ENCODE measurements at regions of chr6 and their contacts with region 1.

Region 1: GRCh38 chr6:138115877-138116660 is 8.8 kb upstream of the PERP start:
- DNase-seq: peak; percentile 74
- ATAC-seq: peak; percentile 89
- H3K4me3 ChIP-seq: no peak overlapping the region
- H3K27ac ChIP-seq: no peak overlapping the region
- H3K4me1 ChIP-seq: no peaks in the 10 kb centered on the region
- H3K27me3 ChIP-seq: peaks cover 19% of the 10 kb centered on the region
- CTCF ChIP-seq: peak; percentile 87
- POLR2A ChIP-seq: no peak
- RAD21 ChIP-seq: peak; percentile 87

Region 2: GRCh38 chr6:138287144-138287955 is 171.3 kb after region 1 on chr6:
- CTCF ChIA-PET with region 1: no interaction called
- POLR2A ChIA-PET with region 1: no interaction called
- dilution Hi-C with region 1: no loop called
- in situ Hi-C with region 1: no loop called
- intact Hi-C with region 1: loop called (anchors 5 kb)
- DNase-seq: no peak
- ATAC-seq: no peak
- H3K4me3 ChIP-seq: no peak overlapping the region
- H3K27ac ChIP-seq: no peak overlapping the region
- H3K4me1 ChIP-seq: no peaks in the 10 kb centered on the region
- H3K27me3 ChIP-seq: peaks cover 7% of the 10 kb centered on the region
- CTCF ChIP-seq: 0 out of 2 replicates have a peak, but pooled peaks have one; percentile 6
- POLR2A ChIP-seq: no peak
- RAD21 ChIP-seq: no peak

Region 3: DNA sequence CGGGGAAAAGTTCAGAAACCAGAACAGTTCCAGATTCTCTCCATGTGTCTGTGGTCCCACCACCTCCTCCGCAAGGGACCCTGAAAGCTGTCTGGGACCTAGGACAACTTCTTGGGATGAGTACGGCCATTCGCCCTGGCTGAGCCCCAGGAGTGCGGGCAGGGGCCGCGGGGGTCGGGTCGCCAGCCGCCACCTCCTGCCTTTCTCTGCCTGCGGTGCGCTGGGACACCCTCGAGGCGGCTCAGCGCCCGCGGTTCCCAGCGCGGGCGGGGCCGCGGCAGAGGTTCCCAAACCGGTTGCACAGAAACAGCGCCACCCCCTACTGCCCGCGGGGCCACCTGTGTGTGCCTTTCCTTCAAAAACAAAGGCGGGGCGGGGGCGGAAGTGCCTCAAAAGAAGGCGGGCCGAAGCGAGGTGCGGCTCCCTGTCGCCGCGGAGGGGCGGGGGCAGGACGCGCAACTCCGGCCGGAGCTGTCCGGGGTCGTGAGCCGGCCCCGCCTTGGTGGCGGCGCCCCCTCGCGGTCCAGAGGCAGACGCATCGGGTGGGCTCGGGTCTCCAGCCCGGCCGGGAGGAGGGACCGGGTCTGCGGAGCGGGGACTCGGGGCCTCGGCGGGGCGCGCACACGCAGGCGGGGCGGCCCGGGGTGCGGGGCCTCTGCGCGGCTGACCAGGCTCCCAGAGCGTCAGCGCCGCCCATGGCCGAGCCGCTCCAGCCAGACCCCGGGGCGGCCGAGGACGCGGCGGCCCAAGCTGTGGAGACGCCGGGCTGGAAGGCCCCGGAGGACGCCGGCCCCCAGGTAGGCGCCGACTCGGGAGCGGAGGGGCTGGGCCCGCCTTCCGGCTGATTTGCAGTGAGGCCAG is 288.0 kb after region 1 on chr6 and contains the start of gene HEBP2:
- CTCF ChIA-PET with region 1: no interaction called
- POLR2A ChIA-PET with region 1: no interaction called
- dilution Hi-C with region 1: no loop called
- in situ Hi-C with region 1: no loop called
- intact Hi-C with region 1: loop called (anchors 2 kb)
- DNase-seq: peak; percentile 65
- ATAC-seq: peak; percentile 88
- H3K4me3 ChIP-seq: peak within 1 kb of the TSS; percentile 79
- H3K27ac ChIP-seq: peak within 1 kb of the TSS; percentile 68
- H3K4me1 ChIP-seq: peaks cover 3% of the 10 kb centered on the region
- H3K27me3 ChIP-seq: no peaks in the 10 kb centered on the region
- CTCF ChIP-seq: peak; percentile 50
- POLR2A ChIP-seq: no peak
- RAD21 ChIP-seq: peak; percentile 33
- total RNA-seq, gene HEBP2: 3.9 and 5.6 TPM in 2 replicates

Region 4: DNA sequence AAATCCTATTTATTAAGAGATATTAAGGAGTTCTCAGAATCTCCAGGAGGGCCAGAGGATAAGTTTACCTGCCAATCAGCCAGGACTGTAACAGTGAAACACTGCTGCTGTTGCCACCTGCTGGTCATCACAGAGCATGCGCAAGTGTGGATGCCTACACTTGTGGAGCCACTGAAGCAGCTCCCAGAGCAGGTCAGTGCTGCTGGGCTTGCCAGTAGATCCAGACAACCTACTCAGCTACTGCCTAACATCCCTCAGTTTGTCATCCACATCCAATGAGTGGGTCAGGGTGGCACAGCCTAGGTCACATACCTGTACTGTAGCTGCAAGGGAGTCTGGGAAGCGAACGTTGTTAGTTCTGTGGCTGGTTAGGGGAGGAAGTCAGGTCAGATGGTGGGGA is 401.6 kb after region 1 on chr6:
- CTCF ChIA-PET with region 1: interaction called, 6 read pairs
- POLR2A ChIA-PET with region 1: no interaction called
- dilution Hi-C with region 1: no loop called
- in situ Hi-C with region 1: loop called (anchors 5 kb)
- intact Hi-C with region 1: loop called (anchors 2 kb)
- DNase-seq: peak; percentile 43
- ATAC-seq: peak; percentile 76
- H3K4me3 ChIP-seq: no peak overlapping the region
- H3K27ac ChIP-seq: no peak overlapping the region
- H3K4me1 ChIP-seq: no peaks in the 10 kb centered on the region
- H3K27me3 ChIP-seq: no peaks in the 10 kb centered on the region
- CTCF ChIP-seq: peak; percentile 55
- POLR2A ChIP-seq: no peak
- RAD21 ChIP-seq: peak; percentile 53

Region 5: DNA sequence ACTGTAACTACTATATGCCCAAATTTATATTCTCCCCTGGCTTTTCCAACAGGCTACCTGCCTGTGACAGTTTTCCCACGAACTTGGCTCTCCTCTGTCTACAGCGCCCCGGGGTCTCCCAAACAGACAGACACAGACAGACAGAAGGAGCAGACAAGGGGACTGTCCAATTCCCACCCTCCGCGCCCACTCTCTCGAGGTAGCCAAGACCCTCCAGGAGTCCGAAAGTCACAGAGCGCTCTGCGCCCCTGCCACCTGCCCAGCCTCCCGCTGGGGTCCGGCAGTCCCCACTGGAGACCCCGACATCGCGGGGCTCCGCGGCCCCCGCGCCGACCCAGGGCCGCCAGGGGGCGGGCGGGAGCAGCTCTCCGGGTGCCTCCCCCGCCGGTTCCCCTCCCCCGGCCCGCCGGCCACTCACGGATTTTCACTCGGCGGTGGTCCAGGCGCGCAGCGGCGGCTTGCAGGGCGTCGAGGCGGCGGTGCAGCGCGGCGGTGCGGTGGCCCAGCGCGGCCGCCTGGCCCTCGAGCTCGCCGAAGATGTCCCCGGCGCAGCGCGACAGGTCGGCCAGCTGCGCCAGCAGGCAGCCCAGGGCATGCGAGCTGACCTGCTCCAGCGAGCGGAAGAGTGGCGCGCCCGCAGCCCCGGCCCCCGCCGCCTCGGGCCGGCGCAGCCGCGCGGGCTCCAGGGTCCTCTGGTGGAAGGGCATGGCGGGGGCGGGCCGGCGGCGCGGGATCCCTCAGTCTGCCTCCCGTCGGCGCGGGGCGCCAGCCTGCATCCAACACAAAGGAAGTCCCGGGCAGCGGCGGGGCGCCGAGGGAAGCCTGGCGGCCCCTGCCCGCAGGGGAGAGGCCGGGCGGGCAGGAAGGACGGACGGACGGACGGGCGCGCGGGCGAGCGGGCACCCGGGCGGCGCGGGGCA is 576.2 kb after region 1 on chr6:
- CTCF ChIA-PET with region 1: no interaction called
- POLR2A ChIA-PET with region 1: no interaction called
- dilution Hi-C with region 1: no loop called
- in situ Hi-C with region 1: no loop called
- intact Hi-C with region 1: loop called (anchors 5 kb)
- DNase-seq: peak; percentile 50
- ATAC-seq: peak; percentile 79
- H3K4me3 ChIP-seq: peak overlapping the region; percentile 88
- H3K27ac ChIP-seq: peak overlapping the region; percentile 65
- H3K4me1 ChIP-seq: no peaks in the 10 kb centered on the region
- H3K27me3 ChIP-seq: no peaks in the 10 kb centered on the region
- CTCF ChIP-seq: peak; percentile 75
- POLR2A ChIP-seq: no peak
- RAD21 ChIP-seq: peak; percentile 40

Region 6: DNA sequence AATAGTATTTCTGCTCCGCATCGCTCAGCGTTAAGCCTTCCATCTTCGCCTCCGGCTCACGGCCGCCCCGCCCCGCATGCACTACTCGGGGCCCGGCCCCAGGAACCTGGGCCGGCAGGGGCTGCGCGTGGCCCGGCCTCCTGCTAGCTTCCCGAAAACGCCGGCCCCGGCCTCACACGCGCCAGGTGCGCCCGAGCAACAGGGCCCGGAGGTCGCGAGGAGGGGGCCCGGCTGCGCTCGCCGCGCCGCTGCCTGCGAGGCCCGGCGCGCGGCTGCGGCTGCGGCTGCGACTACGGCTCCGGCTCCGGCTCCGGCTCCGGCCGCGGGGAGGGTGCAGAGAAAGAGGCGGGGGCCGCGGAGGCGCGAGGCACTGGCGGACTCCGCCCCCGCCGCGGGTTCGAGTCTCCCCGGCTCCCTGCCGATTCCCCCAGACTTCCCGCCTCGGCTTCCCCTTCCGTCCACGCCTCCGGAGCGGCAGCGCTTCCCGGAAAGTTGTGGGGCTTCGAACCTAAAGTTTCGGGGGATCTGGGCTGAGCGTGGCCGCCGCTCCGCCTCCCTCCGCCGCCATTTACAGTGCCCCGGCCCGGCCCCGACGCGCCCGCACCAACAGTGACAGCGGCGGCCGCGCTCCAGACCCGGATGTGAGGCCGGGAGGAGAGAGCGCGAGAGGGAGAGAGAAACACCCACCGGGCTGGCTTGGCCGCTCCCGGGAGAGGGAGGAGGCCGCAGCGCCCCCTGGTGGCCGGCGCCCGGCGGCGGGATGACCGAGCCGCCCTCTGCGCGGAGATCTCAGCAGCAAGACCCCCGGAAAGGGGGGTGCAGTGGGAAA is 871.8 kb after region 1 on chr6 and contains the start of gene REPS1:
- CTCF ChIA-PET with region 1: no interaction called
- POLR2A ChIA-PET with region 1: no interaction called
- dilution Hi-C with region 1: no loop called
- in situ Hi-C with region 1: loop called (anchors 10 kb)
- intact Hi-C with region 1: loop called (anchors 5 kb)
- DNase-seq: peak; percentile 82
- ATAC-seq: peak; percentile 95
- H3K4me3 ChIP-seq: peak within 1 kb of the TSS; percentile 78
- H3K27ac ChIP-seq: peak within 1 kb of the TSS; percentile 92
- H3K4me1 ChIP-seq: peaks cover 2% of the 10 kb centered on the region; the same call in 1 of the 2 replicates
- H3K27me3 ChIP-seq: no peaks in the 10 kb centered on the region; the same call in 1 of the 2 replicates
- CTCF ChIP-seq: peak; percentile 94
- POLR2A ChIP-seq: peak; percentile 85
- RAD21 ChIP-seq: peak; percentile 79
- total RNA-seq, gene REPS1: 21.1 and 21.9 TPM in 2 replicates

Measured in IMR-90 (cell line).